Heart right ventricle (tissue), 16 donors: ENCODE measurements at regions of chr6 and their contacts with region 1.

Region 1: GRCh38 chr6:107489636-107490565 is at the start of gene SOBP:
- DNase-seq: peak; percentile 78 to 81
- ATAC-seq: peak; percentile 39 to 78 (median 53)
- H3K4me3 ChIP-seq: peak within 1 kb of the TSS; percentile 66 to 89 (median 82)
- H3K27ac ChIP-seq: peak within 1 kb of the TSS; percentile 74 to 92 (median 86)
- H3K4me1 ChIP-seq: peaks cover 1 to 55% (median 34%) of the 10 kb centered on the region in 9 donors
- H3K27me3 ChIP-seq: peaks cover 0 to 81% (median 0%) of the 10 kb centered on the region in 7 donors
- CTCF ChIP-seq: peak in 4 of 9 donors; percentile 26 to 45 (median 37)
- total RNA-seq, gene SOBP: 11.1 to 25.3 (median 19.6) TPM

Region 2: GRCh38 chr6:107459283-107460082 is 30.4 kb before region 1 on chr6 and contains the start of gene PDSS2:
- intact Hi-C with region 1: loop called in 2 of 10 experiments (anchors 2 to 5 kb)
- DNase-seq: peak; percentile 98 to 99
- ATAC-seq: peak; percentile 98 to 99 (median 99)
- H3K4me3 ChIP-seq: peak within 1 kb of the TSS; percentile 56 to 97 (median 80)
- H3K27ac ChIP-seq: peak within 1 kb of the TSS; percentile 85 to 97 (median 90)
- H3K4me1 ChIP-seq: peaks cover 0 to 32% (median 19%) of the 10 kb centered on the region in 9 donors
- H3K27me3 ChIP-seq: no peaks in the 10 kb centered on the region
- CTCF ChIP-seq: peak in 8 of 9 donors; percentile 26 to 69 (median 48)
- total RNA-seq, gene PDSS2: 15.5 to 22.2 (median 19.7) TPM

Region 3: DNA sequence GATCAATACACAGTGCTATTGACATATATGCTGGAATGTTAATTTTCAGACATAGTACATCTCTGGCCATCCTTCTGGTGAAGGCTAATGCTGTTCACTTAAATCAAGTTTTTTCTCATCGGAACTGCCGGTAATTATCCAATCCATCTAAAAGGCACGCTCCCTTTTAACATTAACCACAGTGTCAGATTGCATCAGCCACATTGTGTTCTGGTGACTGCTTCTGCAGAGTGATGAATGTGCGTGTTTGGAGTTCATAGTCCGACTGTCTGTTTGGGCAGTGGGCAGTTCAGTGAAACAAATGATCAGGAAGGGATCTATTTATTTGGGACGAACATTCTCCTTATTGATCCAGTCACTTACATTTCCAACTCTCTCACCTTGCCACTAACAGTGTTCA is 49.5 kb after region 1 on chr6:
- intact Hi-C with region 1: loop called in 6 of 10 experiments (anchors 5 to 10 kb)
- DNase-seq: no peak
- ATAC-seq: no peak
- H3K4me3 ChIP-seq: no peak overlapping the region
- H3K27ac ChIP-seq: no peak overlapping the region
- H3K4me1 ChIP-seq: peaks cover 0 to 70% (median 13%) of the 10 kb centered on the region in 9 donors
- H3K27me3 ChIP-seq: no peaks in the 10 kb centered on the region
- CTCF ChIP-seq: no peak

Region 4: DNA sequence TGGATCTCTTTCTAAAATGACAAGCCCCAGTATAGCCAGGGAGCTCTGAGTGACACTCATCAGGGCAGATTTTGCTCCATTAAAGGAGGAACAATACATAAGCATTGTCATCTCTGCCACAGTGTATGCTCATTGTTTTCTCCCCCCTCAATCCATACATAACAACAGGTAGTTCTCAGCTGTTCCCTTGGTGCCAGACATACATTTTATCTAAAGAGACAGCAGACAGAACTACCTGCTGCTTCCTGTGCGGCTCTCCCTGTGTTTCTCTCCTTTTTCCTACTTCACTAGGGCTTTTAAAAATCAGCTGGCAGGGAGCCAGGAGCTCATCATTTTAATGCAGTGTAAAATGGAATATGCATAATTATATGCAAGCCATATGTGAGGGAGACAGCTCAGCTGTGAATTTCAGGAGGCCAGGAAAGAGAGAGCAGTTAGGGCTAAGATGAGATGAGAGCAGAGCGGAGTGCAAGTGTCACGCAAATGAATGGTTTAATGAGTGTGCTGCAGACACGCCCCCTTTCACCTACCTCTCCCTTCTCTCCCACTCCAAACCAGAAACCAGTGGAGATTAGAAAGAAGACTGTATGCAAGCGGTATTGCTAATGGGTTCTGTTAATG is 96.0 kb after region 1 on chr6:
- intact Hi-C with region 1: loop called in 1 of 10 experiments (anchors 5 kb)
- DNase-seq: no peak
- ATAC-seq: no peak
- H3K4me3 ChIP-seq: no peak overlapping the region
- H3K27ac ChIP-seq: no peak overlapping the region
- H3K4me1 ChIP-seq: peaks cover 0 to 32% (median 21%) of the 10 kb centered on the region in 9 donors
- H3K27me3 ChIP-seq: no peaks in the 10 kb centered on the region
- CTCF ChIP-seq: no peak

Region 5: DNA sequence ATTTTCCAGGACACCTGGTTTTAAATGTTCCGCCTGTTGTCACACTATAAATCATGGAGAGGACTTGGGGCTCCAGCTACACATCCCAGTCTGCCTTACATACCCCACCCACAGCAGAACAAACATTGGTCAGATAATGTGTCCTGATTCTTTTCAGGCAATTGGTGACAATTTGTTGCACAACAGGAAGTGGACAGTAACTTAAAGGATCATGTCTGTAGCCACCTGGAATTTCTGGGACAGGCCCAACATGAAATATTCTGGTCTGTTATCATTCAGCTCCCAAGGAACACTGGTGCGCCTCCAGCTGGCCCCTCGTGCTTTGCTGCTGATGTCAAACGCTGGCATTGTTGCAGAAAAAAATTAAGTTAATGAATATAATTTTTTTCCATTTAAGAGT is 117.2 kb after region 1 on chr6:
- intact Hi-C with region 1: loop called in 3 of 10 experiments (anchors 5 to 10 kb)
- DNase-seq: peak; percentile 38 to 65
- ATAC-seq: peak in 7 of 8 donors; percentile 46 to 80 (median 65)
- H3K4me3 ChIP-seq: no peak overlapping the region
- H3K27ac ChIP-seq: peak overlapping the region in 6 of 10 donors; percentile 18 to 45 (median 34)
- H3K4me1 ChIP-seq: peaks cover 10 to 79% (median 51%) of the 10 kb centered on the region in 9 donors
- H3K27me3 ChIP-seq: no peaks in the 10 kb centered on the region
- CTCF ChIP-seq: peak in 4 of 9 donors; percentile 17 to 42 (median 34)

Region 6: GRCh38 chr6:107620732-107621131 is 130.8 kb after region 1 on chr6:
- intact Hi-C with region 1: no loop called
- DNase-seq: no peak
- ATAC-seq: peak in 4 of 8 donors; percentile 43 to 57 (median 46)
- H3K4me3 ChIP-seq: no peak overlapping the region
- H3K27ac ChIP-seq: peak overlapping the region in 2 of 10 donors; percentile 19 to 39
- H3K4me1 ChIP-seq: peaks cover 3 to 46% (median 14%) of the 10 kb centered on the region in 9 donors
- H3K27me3 ChIP-seq: no peaks in the 10 kb centered on the region
- CTCF ChIP-seq: no peak

Region 7: DNA sequence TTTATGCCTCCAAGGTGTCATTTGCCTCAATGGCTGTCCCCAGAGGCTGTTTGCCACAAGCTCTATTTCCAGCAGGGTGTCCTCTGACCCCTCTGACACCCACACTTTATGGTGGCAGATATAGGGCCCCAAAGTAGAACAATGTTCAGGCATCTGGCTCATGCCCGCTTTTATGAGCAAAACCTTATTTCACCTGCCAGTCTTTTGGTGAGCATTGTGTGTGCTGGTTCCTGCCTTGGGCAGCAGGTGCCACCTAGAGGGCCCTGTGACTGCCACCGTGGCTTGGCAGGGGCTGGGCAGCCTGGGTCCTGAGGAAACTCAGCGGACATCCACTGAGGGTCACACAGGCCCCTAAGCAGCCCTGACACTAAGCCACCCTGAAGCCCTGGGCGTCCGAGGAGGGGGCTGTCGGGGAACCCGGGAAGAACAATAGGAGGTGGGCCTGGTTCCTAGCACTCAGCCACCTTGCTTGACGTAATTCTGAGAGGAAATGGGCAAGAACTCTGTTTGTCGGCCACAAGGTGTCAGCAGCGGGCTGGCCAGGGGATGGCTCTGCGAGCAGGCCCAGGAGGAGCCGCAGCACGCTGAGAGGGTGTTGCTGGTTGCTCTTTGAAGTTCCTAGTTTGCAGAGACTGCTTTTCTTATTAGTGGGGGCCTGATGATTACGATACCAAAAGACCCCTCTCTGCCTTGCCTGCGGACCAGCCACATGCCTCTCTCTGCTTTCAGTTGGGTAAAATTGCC is 185.3 kb after region 1 on chr6:
- intact Hi-C with region 1: loop called in 1 of 10 experiments (anchors 10 kb)
- DNase-seq: peak; percentile 88 to 89
- ATAC-seq: peak; percentile 85 to 96 (median 92)
- H3K4me3 ChIP-seq: peak overlapping the region in 7 of 10 donors; percentile 19 to 43 (median 28)
- H3K27ac ChIP-seq: peak overlapping the region in 2 of 10 donors; percentile 23 to 45
- H3K4me1 ChIP-seq: peaks cover 7 to 31% (median 19%) of the 10 kb centered on the region in 9 donors
- H3K27me3 ChIP-seq: no peaks in the 10 kb centered on the region
- CTCF ChIP-seq: peak; percentile 87 to 95 (median 92)

Region 8: DNA sequence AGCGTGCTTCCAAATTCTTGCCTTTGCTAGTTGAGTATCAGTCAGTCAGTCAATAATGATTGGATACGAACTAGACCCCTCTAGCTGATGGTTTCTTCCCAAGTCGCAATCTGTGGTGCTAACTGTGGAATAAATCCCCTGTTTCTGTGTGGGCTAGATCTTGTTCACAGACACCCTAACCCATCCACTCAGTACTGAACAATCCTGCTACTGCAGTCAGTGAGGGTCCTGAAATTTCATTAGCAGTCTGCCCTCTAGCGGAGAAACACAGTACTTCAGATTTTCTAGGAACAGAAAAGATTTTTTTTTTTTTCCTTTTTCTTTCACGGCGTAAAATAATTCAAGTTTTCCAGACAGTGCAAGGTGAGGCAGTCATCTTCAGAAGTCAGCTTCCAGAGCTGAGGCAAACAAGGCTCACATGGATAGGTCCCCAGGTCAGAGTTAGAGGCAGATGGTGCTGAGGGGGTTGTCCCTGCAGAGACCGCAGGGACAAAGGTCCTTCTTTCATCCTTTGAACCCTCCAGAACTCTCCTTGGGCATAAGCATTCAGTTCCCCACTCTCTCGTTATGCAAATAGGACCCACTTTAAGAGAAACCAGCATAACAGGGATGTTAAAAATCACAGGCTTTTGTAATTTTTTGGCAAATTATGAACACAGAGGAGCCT is 214.6 kb after region 1 on chr6:
- intact Hi-C with region 1: no loop called
- DNase-seq: peak in 1 of 2 donors; percentile 49
- ATAC-seq: peak in 6 of 8 donors; percentile 52 to 73 (median 62)
- H3K4me3 ChIP-seq: peak overlapping the region in 2 of 10 donors; percentile 6 to 19
- H3K27ac ChIP-seq: no peak overlapping the region
- H3K4me1 ChIP-seq: peaks cover 0 to 4% (median 0%) of the 10 kb centered on the region in 9 donors
- H3K27me3 ChIP-seq: peaks cover 0 to 3% (median 0%) of the 10 kb centered on the region in 7 donors
- CTCF ChIP-seq: peak; percentile 78 to 89 (median 84)